PC-9 (cell line): ENCODE measurements at regions of chr14 and their contacts with region 1.

Region 1: DNA sequence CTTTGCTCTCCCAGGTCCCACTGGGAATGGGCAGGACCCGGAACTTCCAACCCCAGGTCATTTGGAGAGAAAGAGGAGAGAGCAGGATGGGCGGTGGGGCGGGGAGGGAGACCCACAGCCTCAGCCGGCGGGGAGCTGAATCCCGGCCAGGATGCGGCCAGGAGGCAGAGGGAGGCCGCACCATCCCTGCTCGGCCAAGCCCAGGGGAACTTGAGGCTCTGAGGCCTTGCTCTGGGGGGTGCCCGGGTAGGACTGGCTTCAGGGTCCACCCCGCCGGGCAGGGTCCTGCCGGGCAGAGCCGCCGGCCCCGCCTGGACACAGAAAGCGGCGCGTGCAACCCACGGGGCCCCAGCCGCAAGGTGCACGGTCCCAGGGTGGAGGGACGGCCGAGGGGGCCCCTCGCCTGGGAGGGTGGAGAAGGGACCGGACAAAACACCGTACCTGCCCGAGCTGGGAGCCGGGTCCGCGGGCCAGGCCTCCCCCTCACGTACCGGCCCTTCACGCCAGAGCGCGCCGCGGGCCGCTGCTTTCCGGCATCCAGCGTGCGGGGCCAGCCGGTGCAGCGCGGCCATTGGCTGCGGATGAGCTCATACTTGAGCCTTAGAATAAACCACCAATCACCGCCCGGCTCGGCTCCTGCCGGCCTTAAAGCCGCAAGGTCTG is at the start of gene RPS6KL1:
- DNase-seq: peak; percentile 66 to 87
- H3K4me3 ChIP-seq: peak within 1 kb of the TSS; percentile 76
- H3K27ac ChIP-seq: no peak within 1 kb of the TSS
- H3K4me1 ChIP-seq: peaks cover 4% of the 10 kb centered on the region
- H3K27me3 ChIP-seq: 0 out of 2 replicates have a peak, but pooled peaks cover 4% of the 10 kb centered on the region
- CTCF ChIP-seq: no peak
- total RNA-seq, gene RPS6KL1: 3.4 and 4.2 TPM in 2 replicates

Region 2: GRCh38 chr14:74747237-74747636 is 175.6 kb before region 1 on chr14:
- CTCF ChIA-PET with region 1: no interaction called
- POLR2A ChIA-PET with region 1: no interaction called
- intact Hi-C with region 1: no loop called
- DNase-seq: no peak
- H3K4me3 ChIP-seq: no peak overlapping the region
- H3K27ac ChIP-seq: no peak overlapping the region
- H3K4me1 ChIP-seq: no peaks in the 10 kb centered on the region
- H3K27me3 ChIP-seq: no peaks in the 10 kb centered on the region
- CTCF ChIP-seq: no peak

Region 3: GRCh38 chr14:74980362-74981213 is 57.7 kb after region 1 on chr14:
- CTCF ChIA-PET with region 1: interaction called, 25 read pairs
- POLR2A ChIA-PET with region 1: no interaction called
- intact Hi-C with region 1: no loop called
- DNase-seq: no peak
- H3K4me3 ChIP-seq: no peak overlapping the region
- H3K27ac ChIP-seq: no peak overlapping the region
- H3K4me1 ChIP-seq: peaks cover 36% of the 10 kb centered on the region
- H3K27me3 ChIP-seq: no peaks in the 10 kb centered on the region
- CTCF ChIP-seq: no peak

Region 4: GRCh38 chr14:75301666-75302325 is 378.9 kb after region 1 on chr14:
- CTCF ChIA-PET with region 1: no interaction called
- POLR2A ChIA-PET with region 1: interaction called, 15 read pairs
- intact Hi-C with region 1: no loop called
- DNase-seq: no peak
- H3K4me3 ChIP-seq: no peak overlapping the region
- H3K27ac ChIP-seq: no peak overlapping the region
- H3K4me1 ChIP-seq: peaks cover 22% of the 10 kb centered on the region
- H3K27me3 ChIP-seq: no peaks in the 10 kb centered on the region
- CTCF ChIP-seq: no peak

Region 5: GRCh38 chr14:75427482-75428229 is 504.8 kb after region 1 on chr14 and contains the start of gene JDP2:
- CTCF ChIA-PET with region 1: no interaction called
- POLR2A ChIA-PET with region 1: no interaction called
- intact Hi-C with region 1: no loop called
- DNase-seq: peak; percentile 78 to 99
- H3K4me3 ChIP-seq: peak within 1 kb of the TSS; percentile 90
- H3K27ac ChIP-seq: no peak within 1 kb of the TSS
- H3K4me1 ChIP-seq: peaks cover 52% of the 10 kb centered on the region
- H3K27me3 ChIP-seq: no peaks in the 10 kb centered on the region
- CTCF ChIP-seq: no peak
- total RNA-seq, gene JDP2: 186 and 300 TPM in 2 replicates